ENCODE measurements at regions of chr18 and their contacts with region 1.

Region 1: GRCh38 chr18:12391618-12392165 is 14.7 kb upstream of the AFG3L2 start:
- DNase-seq: peak; percentile 75
- H3K4me3 Mint-ChIP-seq: no peak overlapping the region
- H3K27ac Mint-ChIP-seq: no peak overlapping the region
- H3K4me1 Mint-ChIP-seq: peaks cover 6% of the 10 kb centered on the region
- H3K27me3 Mint-ChIP-seq: no peaks in the 10 kb centered on the region
- CTCF ChIP-seq: peak; percentile 91

Region 2: DNA sequence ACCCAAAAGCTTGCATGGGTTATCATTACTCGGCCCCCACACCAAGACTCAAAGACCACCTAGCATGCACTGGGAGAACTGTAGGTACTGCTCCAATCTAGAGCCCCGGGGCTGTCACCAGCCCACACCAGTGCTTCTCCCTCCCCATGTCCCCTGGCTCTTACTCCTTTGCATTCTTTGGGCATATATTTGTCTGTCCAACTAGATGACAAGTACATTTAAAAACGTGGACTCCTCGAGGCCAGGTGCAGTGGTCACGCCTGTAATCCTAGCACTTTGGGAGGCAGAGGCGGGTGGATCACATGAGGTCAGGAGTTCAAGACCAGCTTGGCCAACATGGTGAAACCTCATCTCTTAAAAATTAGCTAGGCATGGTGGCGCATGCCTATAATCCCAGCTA is 22.5 kb before region 1 on chr18:
- CTCF ChIA-PET with region 1: no interaction called
- POLR2A ChIA-PET with region 1: no interaction called
- intact Hi-C with region 1: no loop called
- DNase-seq: no peak
- H3K4me3 Mint-ChIP-seq: no peak overlapping the region
- H3K27ac Mint-ChIP-seq: no peak overlapping the region
- H3K4me1 Mint-ChIP-seq: peaks cover 26% of the 10 kb centered on the region
- H3K27me3 Mint-ChIP-seq: no peaks in the 10 kb centered on the region
- CTCF ChIP-seq: no peak

Region 3: GRCh38 chr18:12408247-12408869 is 16.7 kb after region 1 on chr18:
- CTCF ChIA-PET with region 1: interaction called, 27 read pairs
- POLR2A ChIA-PET with region 1: interaction called, 11 read pairs
- intact Hi-C with region 1: no loop called
- DNase-seq: peak; percentile 39
- H3K4me3 Mint-ChIP-seq: peak overlapping the region; percentile 80
- H3K27ac Mint-ChIP-seq: peak overlapping the region; percentile 74
- H3K4me1 Mint-ChIP-seq: peaks cover 20% of the 10 kb centered on the region
- H3K27me3 Mint-ChIP-seq: peaks cover 18% of the 10 kb centered on the region
- CTCF ChIP-seq: no peak

Region 4: GRCh38 chr18:12460874-12461273 is 69.2 kb after region 1 on chr18:
- CTCF ChIA-PET with region 1: interaction called, 11 read pairs
- POLR2A ChIA-PET with region 1: no interaction called
- intact Hi-C with region 1: no loop called
- DNase-seq: no peak
- H3K4me3 Mint-ChIP-seq: no peak overlapping the region
- H3K27ac Mint-ChIP-seq: no peak overlapping the region
- H3K4me1 Mint-ChIP-seq: no peaks in the 10 kb centered on the region
- H3K27me3 Mint-ChIP-seq: no peaks in the 10 kb centered on the region
- CTCF ChIP-seq: no peak

Region 5: GRCh38 chr18:12726774-12727550 is 335.3 kb after region 1 on chr18:
- CTCF ChIA-PET with region 1: interaction called, 5 read pairs
- POLR2A ChIA-PET with region 1: no interaction called
- intact Hi-C with region 1: loop called (anchors 10 kb)
- DNase-seq: peak; percentile 67
- H3K4me3 Mint-ChIP-seq: no peak overlapping the region
- H3K27ac Mint-ChIP-seq: no peak overlapping the region
- H3K4me1 Mint-ChIP-seq: peaks cover 7% of the 10 kb centered on the region
- H3K27me3 Mint-ChIP-seq: no peaks in the 10 kb centered on the region
- CTCF ChIP-seq: peak; percentile 87